CD4-positive, alpha-beta T cell (primary cell): ENCODE measurements at regions of chr20 and their contacts with region 1.

Region 1: GRCh38 chr20:53869466-53870258 is 200.7 kb downstream of the BCAS1 start:
- DNase-seq: peak; percentile 44 to 92 (median 61)
- ATAC-seq: peak; percentile 70
- H3K4me3 ChIP-seq: no peak overlapping the region
- H3K4me3 Mint-ChIP-seq: peak overlapping the region; percentile 17
- H3K27ac ChIP-seq: peak overlapping the region; percentile 36 to 46
- H3K27ac Mint-ChIP-seq: peak overlapping the region; percentile 98
- H3K4me1 ChIP-seq: peaks cover 66% of the 10 kb centered on the region
- H3K4me1 Mint-ChIP-seq: peaks cover 73% of the 10 kb centered on the region
- H3K27me3 ChIP-seq: no peaks in the 10 kb centered on the region
- H3K27me3 Mint-ChIP-seq: no peaks in the 10 kb centered on the region
- CTCF ChIP-seq: peak; percentile 92

Region 2: DNA sequence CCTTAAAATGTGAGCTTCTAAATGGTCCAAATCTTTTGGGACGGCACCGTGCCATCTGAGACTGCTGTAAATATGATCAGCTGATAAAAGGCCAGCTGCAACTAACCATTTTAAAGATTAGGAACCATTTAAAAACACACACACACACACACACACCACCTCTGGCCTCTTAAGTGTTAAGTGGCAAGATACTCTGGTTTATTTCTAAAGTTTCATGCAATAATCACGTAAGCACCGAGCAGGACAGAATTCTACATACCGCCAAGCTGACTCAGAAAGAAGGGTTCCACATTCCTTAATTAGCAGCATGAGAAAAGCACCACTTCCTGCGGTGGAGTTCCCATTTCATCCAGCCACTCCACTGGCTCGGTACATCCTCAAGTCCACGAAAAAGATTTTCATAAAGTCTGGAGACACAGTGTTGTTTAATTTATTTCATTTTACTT is 258.2 kb before region 1 on chr20:
- CTCF ChIA-PET with region 1: interaction called, 3 read pairs
- POLR2A ChIA-PET with region 1: interaction called, 25 read pairs
- intact Hi-C with region 1: no loop called
- DNase-seq: peak in 2 of 14 experiments; percentile 47 to 48
- ATAC-seq: no peak
- H3K4me3 ChIP-seq: no peak overlapping the region
- H3K4me3 Mint-ChIP-seq: no peak overlapping the region
- H3K27ac ChIP-seq: peak overlapping the region in 1 of 2 donors; percentile 9
- H3K27ac Mint-ChIP-seq: peak overlapping the region; percentile 77
- H3K4me1 ChIP-seq: peaks cover 26% of the 10 kb centered on the region
- H3K4me1 Mint-ChIP-seq: peaks cover 40% of the 10 kb centered on the region
- H3K27me3 ChIP-seq: no peaks in the 10 kb centered on the region
- H3K27me3 Mint-ChIP-seq: no peaks in the 10 kb centered on the region
- CTCF ChIP-seq: no peak

Region 3: DNA sequence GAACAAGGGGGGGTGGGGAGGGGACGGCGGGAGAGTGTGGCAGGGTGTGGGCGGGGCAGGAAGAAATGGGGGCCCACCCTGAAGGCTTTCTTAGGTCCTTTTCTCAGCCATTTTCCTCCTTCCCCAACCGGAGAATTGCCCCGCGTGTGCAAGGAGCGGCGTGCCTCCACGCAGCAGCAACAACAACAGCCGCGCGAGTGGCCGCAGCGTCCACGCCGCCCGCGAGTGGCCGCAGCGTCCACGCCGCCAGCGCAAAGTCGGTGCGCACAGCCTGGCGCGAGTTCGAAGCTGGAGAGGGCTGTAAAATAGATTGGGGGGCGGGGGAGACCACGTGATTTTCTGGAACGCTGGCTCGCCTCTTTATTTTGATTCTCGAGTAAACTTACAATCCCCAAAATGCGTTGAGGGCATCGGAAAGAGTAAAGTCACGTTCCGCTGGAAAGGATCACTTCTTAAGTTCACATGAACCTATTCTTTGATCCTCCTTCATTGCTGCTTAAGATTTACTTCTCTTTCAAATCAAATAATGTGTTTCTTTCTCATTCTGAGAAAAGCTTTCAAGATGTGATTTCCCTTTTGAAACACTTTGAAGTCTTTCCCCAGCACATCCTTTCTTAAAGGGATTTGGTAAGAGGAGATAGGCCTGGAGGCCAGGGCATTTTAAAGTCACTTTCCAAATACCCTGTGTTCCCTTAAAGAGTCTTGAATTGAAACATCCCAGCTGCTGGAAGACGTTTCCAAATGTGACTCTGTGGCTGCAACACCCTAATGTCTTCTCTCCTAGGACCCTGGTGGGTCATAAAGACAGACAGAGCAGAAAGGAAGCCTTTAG is 209.4 kb before region 1 on chr20:
- CTCF ChIA-PET with region 1: no interaction called
- POLR2A ChIA-PET with region 1: interaction called, 18 read pairs
- intact Hi-C with region 1: loop called in 1 of 2 experiments (anchors 5 kb)
- DNase-seq: peak in 9 of 14 experiments; percentile 11 to 50 (median 38)
- ATAC-seq: peak; percentile 41
- H3K4me3 ChIP-seq: peak overlapping the region; percentile 53
- H3K4me3 Mint-ChIP-seq: peak overlapping the region; percentile 91
- H3K27ac ChIP-seq: peak overlapping the region; percentile 49 to 66
- H3K27ac Mint-ChIP-seq: peak overlapping the region; percentile 92
- H3K4me1 ChIP-seq: peaks cover 33% of the 10 kb centered on the region
- H3K4me1 Mint-ChIP-seq: peaks cover 76% of the 10 kb centered on the region
- H3K27me3 ChIP-seq: no peaks in the 10 kb centered on the region
- H3K27me3 Mint-ChIP-seq: no peaks in the 10 kb centered on the region
- CTCF ChIP-seq: no peak

Region 4: DNA sequence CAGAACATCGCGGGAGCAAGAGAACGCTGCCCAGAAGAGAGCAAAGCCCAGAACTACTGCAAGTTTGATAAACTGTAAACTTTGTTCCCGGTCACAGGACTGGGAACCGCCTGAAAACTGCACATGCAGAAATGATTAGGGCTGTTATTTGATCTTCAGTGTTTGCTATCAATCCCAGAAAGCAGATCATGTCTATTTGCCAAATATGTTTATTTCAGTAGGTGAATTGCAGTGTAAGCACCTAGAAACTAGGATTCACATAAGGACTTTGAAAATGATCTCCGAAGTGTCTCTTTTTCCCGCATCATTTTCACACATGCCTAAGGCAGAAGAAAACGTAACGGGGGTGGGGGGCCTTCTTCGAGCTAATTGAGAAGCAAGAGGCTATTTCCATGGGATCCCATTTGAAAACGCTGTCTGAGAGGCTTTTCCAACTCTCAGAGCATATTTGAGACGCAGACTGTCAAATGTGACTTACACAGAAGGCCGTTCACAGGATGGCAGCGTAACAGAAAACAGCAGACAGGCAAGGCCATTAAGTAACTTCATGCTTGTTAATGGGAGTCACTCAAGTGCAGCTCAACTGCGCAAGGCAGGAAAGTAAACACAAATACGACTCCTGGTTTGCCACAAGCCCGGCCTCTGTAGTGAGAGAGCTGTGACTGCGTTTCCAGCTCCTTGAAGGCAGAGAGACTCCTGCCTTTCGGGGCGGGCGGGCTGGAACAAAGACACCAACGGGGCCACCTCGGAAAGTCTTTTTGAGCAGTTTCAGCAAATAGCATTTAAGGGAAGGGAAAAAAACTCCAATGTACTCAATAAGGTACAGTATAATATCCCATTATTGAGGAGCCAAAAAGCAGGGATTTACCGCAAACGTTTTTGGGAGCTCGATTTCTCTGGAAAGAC is 131.4 kb before region 1 on chr20:
- CTCF ChIA-PET with region 1: no interaction called
- POLR2A ChIA-PET with region 1: interaction called, 10 read pairs
- intact Hi-C with region 1: no loop called
- DNase-seq: no peak
- ATAC-seq: no peak
- H3K4me3 ChIP-seq: no peak overlapping the region
- H3K4me3 Mint-ChIP-seq: no peak overlapping the region
- H3K27ac ChIP-seq: no peak overlapping the region
- H3K27ac Mint-ChIP-seq: no peak overlapping the region
- H3K4me1 ChIP-seq: peaks cover 19% of the 10 kb centered on the region
- H3K4me1 Mint-ChIP-seq: peaks cover 54% of the 10 kb centered on the region
- H3K27me3 ChIP-seq: no peaks in the 10 kb centered on the region
- H3K27me3 Mint-ChIP-seq: no peaks in the 10 kb centered on the region
- CTCF ChIP-seq: no peak

Region 5: GRCh38 chr20:53813636-53814429 is 55.8 kb before region 1 on chr20:
- CTCF ChIA-PET with region 1: no interaction called
- POLR2A ChIA-PET with region 1: no interaction called
- intact Hi-C with region 1: no loop called
- DNase-seq: no peak
- ATAC-seq: no peak
- H3K4me3 ChIP-seq: no peak overlapping the region
- H3K4me3 Mint-ChIP-seq: no peak overlapping the region
- H3K27ac ChIP-seq: no peak overlapping the region
- H3K27ac Mint-ChIP-seq: no peak overlapping the region
- H3K4me1 ChIP-seq: no peaks in the 10 kb centered on the region
- H3K4me1 Mint-ChIP-seq: peaks cover 34% of the 10 kb centered on the region
- H3K27me3 ChIP-seq: no peaks in the 10 kb centered on the region
- H3K27me3 Mint-ChIP-seq: no peaks in the 10 kb centered on the region
- CTCF ChIP-seq: no peak

Region 6: GRCh38 chr20:53839423-53840176 is 30.1 kb before region 1 on chr20:
- CTCF ChIA-PET with region 1: interaction called, 3 read pairs
- POLR2A ChIA-PET with region 1: interaction called, 17 read pairs
- intact Hi-C with region 1: loop called in 1 of 2 experiments (anchors 1 kb)
- DNase-seq: peak; percentile 43 to 91 (median 58)
- ATAC-seq: peak; percentile 73
- H3K4me3 ChIP-seq: no peak overlapping the region
- H3K4me3 Mint-ChIP-seq: peak overlapping the region; percentile 70
- H3K27ac ChIP-seq: peak overlapping the region; percentile 51 to 54
- H3K27ac Mint-ChIP-seq: peak overlapping the region; percentile 87
- H3K4me1 ChIP-seq: peaks cover 88% of the 10 kb centered on the region
- H3K4me1 Mint-ChIP-seq: peaks cover 70% of the 10 kb centered on the region
- H3K27me3 ChIP-seq: no peaks in the 10 kb centered on the region
- H3K27me3 Mint-ChIP-seq: no peaks in the 10 kb centered on the region
- CTCF ChIP-seq: no peak

Region 7: GRCh38 chr20:53915446-53916172 is 45.9 kb after region 1 on chr20:
- CTCF ChIA-PET with region 1: interaction called, 4 read pairs
- POLR2A ChIA-PET with region 1: interaction called, 24 read pairs
- intact Hi-C with region 1: loop called (anchors 1 to 2 kb)
- DNase-seq: peak; percentile 88 to 99 (median 94)
- ATAC-seq: peak; percentile 94
- H3K4me3 ChIP-seq: peak overlapping the region; percentile 68
- H3K4me3 Mint-ChIP-seq: peak overlapping the region; percentile 88
- H3K27ac ChIP-seq: peak overlapping the region in 1 of 2 donors; percentile 54
- H3K27ac Mint-ChIP-seq: peak overlapping the region; percentile 69
- H3K4me1 ChIP-seq: peaks cover 24% of the 10 kb centered on the region
- H3K4me1 Mint-ChIP-seq: peaks cover 21% of the 10 kb centered on the region
- H3K27me3 ChIP-seq: no peaks in the 10 kb centered on the region
- H3K27me3 Mint-ChIP-seq: no peaks in the 10 kb centered on the region
- CTCF ChIP-seq: peak; percentile 86